ENCODE measurements at regions of chr3 and their contacts with region 1.

Region 1: DNA sequence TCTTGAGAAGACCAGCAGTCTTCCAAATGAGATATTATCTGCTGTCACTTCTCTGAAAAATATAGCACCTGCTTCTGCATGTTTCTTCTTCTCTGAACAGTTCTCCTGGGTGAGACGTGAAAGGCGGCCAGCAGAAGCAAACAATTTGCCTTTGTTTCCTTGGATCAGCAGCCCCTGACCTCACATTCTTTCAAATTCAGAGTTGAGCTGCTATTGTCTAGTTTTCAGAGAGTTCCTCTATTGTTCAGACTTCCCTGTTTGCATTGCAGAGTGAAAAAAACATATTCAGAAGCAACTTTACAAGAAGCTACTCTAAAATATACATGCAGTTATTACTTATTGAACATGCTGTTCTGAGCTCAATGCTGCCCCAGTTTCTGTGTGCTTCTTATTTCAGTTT is 653.6 kb downstream of the NAALADL2 start:
- DNase-seq: no peak
- ATAC-seq: no peak

Region 2: DNA sequence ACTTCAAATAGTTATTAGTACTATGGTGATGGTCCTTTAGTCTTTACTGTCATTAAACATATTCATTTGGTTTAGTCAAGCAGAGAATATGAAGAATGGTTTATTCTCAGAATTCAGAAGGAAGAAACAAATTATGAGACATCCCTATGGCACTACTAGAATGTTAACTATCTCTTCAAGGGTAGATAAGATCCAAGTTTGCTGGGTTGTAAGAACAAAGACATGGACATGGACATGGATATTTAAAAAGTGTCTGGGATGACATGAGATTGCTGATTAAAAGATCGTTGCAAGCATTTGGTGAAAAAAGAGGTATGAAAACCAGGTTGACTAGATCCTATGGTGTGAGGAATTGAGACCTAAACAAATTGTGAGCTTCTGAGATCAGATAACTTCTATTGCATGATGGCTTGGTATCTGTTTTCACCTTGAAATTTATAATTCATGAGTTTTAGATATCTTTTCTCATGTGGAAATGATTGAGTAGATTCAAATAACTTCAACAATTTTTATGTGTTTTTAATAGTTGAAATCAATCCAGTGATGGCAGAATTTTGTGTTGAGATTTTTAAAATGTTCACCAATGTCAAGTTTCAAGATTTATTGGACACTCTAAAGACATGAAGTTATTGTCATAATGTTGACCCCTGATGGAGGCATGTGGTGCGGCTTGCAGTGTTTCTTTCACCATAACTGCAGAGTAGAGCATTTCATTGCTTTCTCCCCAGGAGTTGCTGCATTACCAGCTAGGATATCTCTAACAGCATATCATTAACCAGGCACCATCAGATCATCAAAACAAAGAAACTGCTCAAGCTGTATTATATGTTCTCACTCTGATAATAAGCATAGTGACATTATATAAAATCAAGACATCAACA is 581.0 kb before region 1 on chr3:
- intact Hi-C with region 1: no loop called
- DNase-seq: no peak
- ATAC-seq: no peak

Region 3: GRCh38 chr3:175434561-175434960 is 78.1 kb before region 1 on chr3:
- intact Hi-C with region 1: no loop called
- DNase-seq: no peak
- ATAC-seq: no peak

Region 4: DNA sequence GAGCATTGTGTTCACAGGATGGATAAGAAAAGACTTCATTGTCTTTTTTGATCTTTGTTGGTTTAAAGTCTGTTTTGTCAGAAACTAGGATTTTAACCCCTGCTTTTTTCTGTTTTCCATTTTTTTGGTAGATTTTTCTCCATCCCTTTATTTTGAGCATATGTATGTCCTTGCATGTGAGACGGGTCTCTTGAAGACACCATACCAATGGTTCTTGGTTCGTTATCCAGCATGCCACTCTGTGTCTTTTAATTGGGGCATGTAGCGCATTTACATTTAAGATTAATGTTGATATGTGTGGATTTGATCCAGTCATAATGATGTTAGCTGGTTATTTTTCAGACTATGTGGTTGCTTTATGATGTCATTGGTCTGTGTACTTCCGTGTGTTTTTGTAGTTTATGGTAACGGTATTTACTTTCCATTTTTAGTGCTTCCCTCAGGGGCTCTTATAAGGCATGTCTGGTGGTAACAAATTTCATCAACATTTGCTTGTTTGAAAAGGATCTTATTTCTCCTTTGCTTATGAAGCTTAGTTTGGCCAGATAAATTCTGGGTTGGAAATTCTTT is 33.5 kb after region 1 on chr3:
- intact Hi-C with region 1: loop called (anchors 5 kb)
- DNase-seq: no peak
- ATAC-seq: no peak